ENCODE measurements at regions of chr12 and their contacts with region 1.

Region 1: GRCh38 chr12:50504798-50505385 is at the start of gene DIP2B:
- DNase-seq: peak; percentile 92 to 96 (median 95)
- ATAC-seq: peak; percentile 94
- H3K4me3 ChIP-seq: peak within 1 kb of the TSS; percentile 94
- H3K27ac ChIP-seq: peak within 1 kb of the TSS; percentile 86
- H3K4me1 ChIP-seq: peaks cover 22 to 23% of the 10 kb centered on the region in 2 experiments
- H3K27me3 ChIP-seq: no peaks in the 10 kb centered on the region
- CTCF ChIP-seq: peak; percentile 86 to 95 (median 88)
- EP300 ChIP-seq: no peak
- POLR2A ChIP-seq: peak; percentile 78
- RAD21 ChIP-seq: peak; percentile 97
- polyA plus RNA-seq, gene DIP2B: 4.6 to 5.8 TPM

Region 2: DNA sequence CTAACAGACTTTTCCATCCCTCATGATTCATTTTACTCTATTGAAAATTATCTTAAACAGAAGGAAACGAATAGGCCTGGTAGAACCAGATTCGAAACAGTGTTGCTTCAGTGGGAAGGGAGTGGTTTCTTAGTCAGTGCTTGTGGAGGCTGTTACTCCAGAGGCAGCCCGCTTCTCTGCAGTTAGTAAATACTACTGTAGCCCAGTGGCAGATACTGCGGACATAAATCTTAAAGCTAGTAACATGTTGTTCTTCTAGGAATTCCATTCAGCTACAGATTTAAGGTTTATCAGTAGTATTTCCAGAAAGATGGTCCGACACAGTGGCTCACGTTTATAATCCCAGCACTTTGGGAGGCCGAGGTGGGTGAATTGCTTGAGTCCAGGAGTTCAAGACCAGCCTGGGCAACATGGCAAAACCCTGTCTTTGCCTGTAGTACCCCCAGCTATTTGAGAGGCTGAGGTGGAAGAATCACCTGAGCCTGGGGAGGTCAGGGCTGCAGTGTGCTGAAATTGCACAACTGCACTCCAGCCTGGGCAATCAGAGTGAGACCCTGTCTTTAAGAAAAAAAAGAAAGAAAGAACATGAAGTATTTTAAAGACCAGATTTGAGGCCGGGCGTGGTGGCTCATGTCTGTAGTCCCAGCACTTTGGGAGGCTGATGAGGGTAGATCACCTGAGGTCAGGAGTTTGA is 45.8 kb after region 1 on chr12:
- CTCF ChIA-PET with region 1: no interaction called
- POLR2A ChIA-PET with region 1: interaction called, 3 read pairs
- in situ Hi-C with region 1: no loop called
- intact Hi-C with region 1: loop called (anchors 2 kb)
- DNase-seq: peak; percentile 31 to 78 (median 49)
- ATAC-seq: peak; percentile 92
- H3K4me3 ChIP-seq: no peak overlapping the region
- H3K27ac ChIP-seq: peak overlapping the region; percentile 67; the same call in 2 of the 3 replicates
- H3K4me1 ChIP-seq: peaks cover 28 to 41% of the 10 kb centered on the region in 2 experiments
- H3K27me3 ChIP-seq: no peaks in the 10 kb centered on the region
- CTCF ChIP-seq: no peak
- EP300 ChIP-seq: peak; percentile 34; the same call in 1 of the 2 replicates
- POLR2A ChIP-seq: no peak
- RAD21 ChIP-seq: peak in 1 of 2 experiments; percentile 18; a peak in 1 of 4 replicates

Region 3: DNA sequence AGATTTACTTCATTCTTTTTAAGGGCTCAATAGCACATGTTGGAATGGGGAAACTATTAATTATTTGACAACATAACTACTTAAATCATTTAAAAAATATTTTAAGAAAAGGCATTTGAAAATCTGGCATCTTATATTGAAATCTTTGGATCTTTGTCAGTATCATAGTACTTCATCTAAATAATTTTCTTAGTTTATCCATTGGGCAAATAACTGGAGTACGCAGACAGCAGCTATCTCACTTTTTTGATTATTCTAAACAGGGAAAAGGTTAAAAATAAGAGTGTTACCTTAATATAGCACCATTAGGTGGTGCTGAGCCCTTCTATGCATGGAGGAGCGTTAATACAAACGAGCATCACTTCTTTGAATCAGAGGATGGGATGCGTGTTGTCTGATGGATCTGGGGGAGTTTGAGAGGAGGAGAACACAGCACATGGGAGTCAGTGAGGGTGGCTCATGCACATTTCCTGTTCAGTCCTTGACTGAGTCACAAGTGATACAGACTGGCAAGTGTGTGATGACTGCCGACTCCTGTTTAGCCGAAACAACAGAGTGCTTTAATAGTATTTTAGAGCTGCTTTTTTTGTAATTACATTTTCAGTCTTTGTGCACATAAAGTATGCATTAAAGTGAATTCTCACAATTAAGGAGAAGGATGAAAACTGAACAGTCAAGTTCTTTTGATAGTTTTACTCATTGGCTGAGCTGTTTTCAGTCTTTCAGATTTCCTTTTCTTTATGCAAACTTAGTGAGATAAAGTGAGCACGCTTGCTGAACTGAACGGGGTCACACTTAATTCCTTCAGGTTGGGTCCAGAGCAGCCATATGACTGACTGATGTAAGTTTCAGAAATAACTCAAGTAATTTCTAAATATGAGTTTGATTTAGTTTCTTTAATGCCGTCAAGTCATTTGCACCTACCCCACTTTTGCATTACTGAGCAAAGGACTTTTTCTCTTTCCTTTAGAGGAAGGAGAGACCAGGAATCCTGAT is 92.6 kb after region 1 on chr12:
- CTCF ChIA-PET with region 1: no interaction called
- POLR2A ChIA-PET with region 1: interaction called, 3 read pairs
- in situ Hi-C with region 1: no loop called
- intact Hi-C with region 1: loop called (anchors 5 kb)
- DNase-seq: peak in 2 of 4 experiments; percentile 60 to 73
- ATAC-seq: peak; percentile 85
- H3K4me3 ChIP-seq: no peak overlapping the region
- H3K27ac ChIP-seq: peak overlapping the region; percentile 50; the same call in 1 of the 3 replicates
- H3K4me1 ChIP-seq: peaks cover 0 to 19% of the 10 kb centered on the region in 2 experiments; a peak in 4 of 5 replicates
- H3K27me3 ChIP-seq: no peaks in the 10 kb centered on the region
- CTCF ChIP-seq: peak in 2 of 3 experiments; percentile 18 to 20; a peak in 1 of 6 replicates
- EP300 ChIP-seq: no peak; the same call in 1 of the 2 replicates
- POLR2A ChIP-seq: no peak
- RAD21 ChIP-seq: peak in 1 of 2 experiments; percentile 43; a peak in 3 of 4 replicates

Region 4: GRCh38 chr12:50637870-50638481 is 133.1 kb after region 1 on chr12:
- CTCF ChIA-PET with region 1: interaction called, 19 read pairs
- POLR2A ChIA-PET with region 1: no interaction called
- in situ Hi-C with region 1: loop called (anchors 5 kb)
- intact Hi-C with region 1: loop called (anchors 1 kb)
- DNase-seq: peak in 2 of 4 experiments; percentile 43 to 50
- ATAC-seq: peak; percentile 49; the same call in 2 of the 3 replicates
- H3K4me3 ChIP-seq: no peak overlapping the region
- H3K27ac ChIP-seq: no peak overlapping the region
- H3K4me1 ChIP-seq: peaks cover 6 to 14% of the 10 kb centered on the region in 2 experiments; a peak in 4 of 5 replicates
- H3K27me3 ChIP-seq: no peaks in the 10 kb centered on the region
- CTCF ChIP-seq: peak; percentile 41 to 77 (median 49); a peak in 4 of 6 replicates
- EP300 ChIP-seq: no peak
- POLR2A ChIP-seq: no peak
- RAD21 ChIP-seq: peak; percentile 91 to 92

Region 5: GRCh38 chr12:50734409-50735263 is 229.7 kb after region 1 on chr12:
- CTCF ChIA-PET with region 1: interaction called, 5 read pairs
- POLR2A ChIA-PET with region 1: no interaction called
- in situ Hi-C with region 1: no loop called
- intact Hi-C with region 1: loop called (anchors 1 kb)
- DNase-seq: peak; percentile 26 to 62 (median 38)
- ATAC-seq: peak; percentile 93
- H3K4me3 ChIP-seq: no peak overlapping the region
- H3K27ac ChIP-seq: 0 out of 3 replicates have a peak overlapping the region, but pooled peaks have one; percentile 6
- H3K4me1 ChIP-seq: peaks cover 0 to 3% of the 10 kb centered on the region in 2 experiments; a peak in 1 of 5 replicates
- H3K27me3 ChIP-seq: no peaks in the 10 kb centered on the region
- CTCF ChIP-seq: peak; percentile 71 to 77 (median 75)
- EP300 ChIP-seq: no peak
- POLR2A ChIP-seq: no peak
- RAD21 ChIP-seq: peak; percentile 37 to 71

Region 6: GRCh38 chr12:50740307-50740706 is 235.4 kb after region 1 on chr12:
- CTCF ChIA-PET with region 1: no interaction called
- POLR2A ChIA-PET with region 1: no interaction called
- in situ Hi-C with region 1: loop called (anchors 10 kb)
- intact Hi-C with region 1: no loop called
- DNase-seq: no peak
- ATAC-seq: no peak
- H3K4me3 ChIP-seq: no peak overlapping the region
- H3K27ac ChIP-seq: no peak overlapping the region
- H3K4me1 ChIP-seq: no peaks in the 10 kb centered on the region
- H3K27me3 ChIP-seq: no peaks in the 10 kb centered on the region
- CTCF ChIP-seq: no peak
- EP300 ChIP-seq: no peak
- POLR2A ChIP-seq: no peak
- RAD21 ChIP-seq: no peak